GM18951 (cell line): ENCODE measurements at regions of chr13 and their contacts with region 1.

Region 1: GRCh38 chr13:94620286-94620896 is 18.7 kb downstream of the GPR180 start:
- POLR2A ChIP-seq: no peak

Region 2: DNA sequence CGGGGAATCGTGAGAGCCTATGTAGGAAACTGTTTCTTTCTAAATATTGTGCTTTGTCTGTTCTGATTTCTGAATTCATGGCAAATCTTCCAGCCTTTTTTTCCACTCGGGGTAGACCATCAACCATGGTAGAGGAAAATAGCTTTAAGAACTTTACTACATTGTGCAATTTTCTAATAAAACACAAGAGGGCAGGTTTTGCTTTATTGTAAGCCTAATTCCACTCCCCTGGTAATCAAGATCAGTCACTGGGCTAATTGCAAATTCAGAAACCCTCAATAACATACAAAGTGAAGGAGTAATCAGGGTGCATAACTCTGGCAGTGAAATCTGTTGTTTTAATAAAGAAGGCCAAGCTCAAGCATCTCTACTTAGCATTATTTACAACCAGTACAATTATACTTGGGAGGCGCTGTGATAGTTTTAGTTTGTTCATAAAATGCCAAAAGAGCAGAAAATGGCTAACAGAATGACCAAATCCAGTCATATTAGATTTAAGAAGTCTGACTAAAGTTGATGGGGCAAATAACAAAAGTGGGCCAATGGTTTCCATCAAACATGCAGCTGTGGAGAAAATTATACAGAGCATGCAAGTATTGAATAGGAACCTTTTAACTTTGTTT is 184.7 kb before region 1 on chr13:
- in situ Hi-C with region 1: loop called (anchors 5 kb)
- POLR2A ChIP-seq: no peak